CD8-positive, alpha-beta T cell (primary cell): ENCODE measurements at regions of chr2 and their contacts with region 1.

Region 1: DNA sequence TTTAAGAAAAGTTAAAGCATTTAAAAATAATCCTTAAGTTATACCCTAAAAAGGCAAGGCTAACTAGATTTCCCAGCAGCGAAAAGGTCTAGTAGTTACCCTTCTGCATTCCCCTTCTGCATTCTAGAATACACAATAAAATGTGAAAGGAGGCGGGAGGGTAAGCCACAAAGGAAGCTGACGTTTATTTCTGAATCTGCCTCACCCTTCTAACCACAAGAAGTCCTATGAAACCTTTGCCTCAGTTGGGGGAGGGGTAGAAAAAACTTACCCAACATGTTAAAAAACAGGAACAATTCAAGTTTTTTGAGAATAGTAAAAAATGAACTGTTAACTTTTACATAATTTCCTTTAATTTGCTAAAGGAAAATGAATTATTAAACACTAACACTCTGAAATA is 11.3 kb downstream of the STK17B start:
- DNase-seq: peak in 7 of 9 experiments; percentile 49 to 94 (median 69)
- ATAC-seq: peak; percentile 46
- H3K4me3 ChIP-seq: peak overlapping the region; percentile 22 to 45
- H3K4me3 Mint-ChIP-seq: peak overlapping the region; percentile 58
- H3K27ac ChIP-seq: peak overlapping the region; percentile 75 to 91
- H3K27ac Mint-ChIP-seq: peak overlapping the region; percentile 73
- H3K4me1 ChIP-seq: peaks cover 86% of the 10 kb centered on the region
- H3K4me1 Mint-ChIP-seq: peaks cover 82% of the 10 kb centered on the region
- H3K27me3 ChIP-seq: no peaks in the 10 kb centered on the region
- H3K27me3 Mint-ChIP-seq: no peaks in the 10 kb centered on the region
- CTCF ChIP-seq: no peak

Region 2: DNA sequence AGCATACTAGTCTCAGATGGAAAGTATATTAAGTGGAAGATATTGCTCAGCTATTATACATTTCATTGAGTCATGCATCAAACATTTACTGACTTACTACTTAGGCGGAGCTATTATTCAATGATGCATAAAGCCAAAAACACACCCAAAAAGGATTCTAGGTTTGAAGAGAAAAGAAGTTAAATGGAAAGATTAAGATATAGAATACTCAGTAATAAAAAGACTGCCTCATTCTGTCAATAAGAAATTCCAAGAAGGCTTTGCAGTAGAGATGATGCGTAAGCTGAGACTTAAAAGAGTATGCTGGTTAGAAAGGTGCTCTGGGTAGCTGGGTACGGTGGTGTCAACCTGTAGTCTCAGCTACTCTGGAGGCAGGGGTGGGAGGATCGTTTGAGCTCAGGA is 16.4 kb before region 1 on chr2:
- CTCF ChIA-PET with region 1: interaction called, 22 read pairs
- POLR2A ChIA-PET with region 1: interaction called, 6 read pairs
- intact Hi-C with region 1: loop called in 1 of 2 experiments (anchors 1 kb)
- DNase-seq: no peak
- ATAC-seq: no peak
- H3K4me3 ChIP-seq: no peak overlapping the region
- H3K4me3 Mint-ChIP-seq: peak overlapping the region; percentile 26
- H3K27ac ChIP-seq: peak overlapping the region in 1 of 2 experiments; percentile 16
- H3K27ac Mint-ChIP-seq: peak overlapping the region; percentile 81
- H3K4me1 ChIP-seq: peaks cover 81% of the 10 kb centered on the region
- H3K4me1 Mint-ChIP-seq: peaks cover 75% of the 10 kb centered on the region
- H3K27me3 ChIP-seq: no peaks in the 10 kb centered on the region
- H3K27me3 Mint-ChIP-seq: no peaks in the 10 kb centered on the region
- CTCF ChIP-seq: no peak

Region 3: GRCh38 chr2:196149948-196150347 is 10.2 kb before region 1 on chr2:
- CTCF ChIA-PET with region 1: interaction called, 22 read pairs
- POLR2A ChIA-PET with region 1: interaction called, 6 read pairs
- intact Hi-C with region 1: loop called in 1 of 2 experiments (anchors 1 kb)
- DNase-seq: peak in 2 of 9 experiments; percentile 35 to 65
- ATAC-seq: peak; percentile 27
- H3K4me3 ChIP-seq: peak overlapping the region in 1 of 2 experiments; percentile 23
- H3K4me3 Mint-ChIP-seq: peak overlapping the region; percentile 70
- H3K27ac ChIP-seq: peak overlapping the region; percentile 4 to 17
- H3K27ac Mint-ChIP-seq: peak overlapping the region; percentile 86
- H3K4me1 ChIP-seq: peaks cover 92% of the 10 kb centered on the region
- H3K4me1 Mint-ChIP-seq: peaks cover 89% of the 10 kb centered on the region
- H3K27me3 ChIP-seq: no peaks in the 10 kb centered on the region
- H3K27me3 Mint-ChIP-seq: no peaks in the 10 kb centered on the region
- CTCF ChIP-seq: no peak